ENCODE measurements at regions of chr9 and their contacts with region 1.

Region 1: GRCh38 chr9:8961186-8961851 is 1161.7 kb upstream of the DMAC1 start:
- DNase-seq: no peak
- ATAC-seq: no peak
- H3K4me3 ChIP-seq: no peak overlapping the region
- H3K4me3 Mint-ChIP-seq: no peak overlapping the region
- H3K27ac ChIP-seq: no peak overlapping the region
- H3K27ac Mint-ChIP-seq: no peak overlapping the region
- H3K4me1 ChIP-seq: no peaks in the 10 kb centered on the region
- H3K4me1 Mint-ChIP-seq: no peaks in the 10 kb centered on the region
- H3K27me3 ChIP-seq: no peaks in the 10 kb centered on the region
- H3K27me3 Mint-ChIP-seq: no peaks in the 10 kb centered on the region
- CTCF ChIP-seq: no peak

Region 2: GRCh38 chr9:8917956-8918739 is 43.2 kb before region 1 on chr9:
- CTCF ChIA-PET with region 1: no interaction called
- POLR2A ChIA-PET with region 1: no interaction called
- intact Hi-C with region 1: loop called in 1 of 2 experiments (anchors 10 kb)
- DNase-seq: no peak
- ATAC-seq: no peak
- H3K4me3 ChIP-seq: no peak overlapping the region
- H3K4me3 Mint-ChIP-seq: no peak overlapping the region
- H3K27ac ChIP-seq: no peak overlapping the region
- H3K27ac Mint-ChIP-seq: no peak overlapping the region
- H3K4me1 ChIP-seq: no peaks in the 10 kb centered on the region
- H3K4me1 Mint-ChIP-seq: no peaks in the 10 kb centered on the region
- H3K27me3 ChIP-seq: no peaks in the 10 kb centered on the region
- H3K27me3 Mint-ChIP-seq: no peaks in the 10 kb centered on the region
- CTCF ChIP-seq: no peak

Region 3: DNA sequence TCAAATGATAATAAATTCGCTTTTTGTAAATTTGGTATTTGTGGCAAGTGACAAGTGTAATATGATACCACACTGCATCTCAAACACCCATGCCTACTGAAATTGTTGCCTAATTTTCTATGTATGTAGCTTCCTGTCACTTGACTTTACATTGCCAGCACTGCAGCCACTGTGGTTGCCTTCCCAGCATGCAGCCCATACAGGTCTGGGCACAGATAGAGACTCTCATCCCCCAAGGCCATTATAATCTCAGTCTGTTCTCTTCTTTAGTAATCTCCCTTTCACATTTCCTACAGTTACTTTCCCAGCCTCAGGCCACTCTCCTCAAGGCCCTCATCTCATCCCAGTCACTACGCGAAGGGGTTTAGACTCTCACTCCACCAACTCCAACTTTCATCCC is 450.9 kb after region 1 on chr9:
- CTCF ChIA-PET with region 1: no interaction called
- POLR2A ChIA-PET with region 1: no interaction called
- intact Hi-C with region 1: no loop called
- DNase-seq: no peak
- ATAC-seq: no peak
- H3K4me3 ChIP-seq: no peak overlapping the region
- H3K4me3 Mint-ChIP-seq: no peak overlapping the region
- H3K27ac ChIP-seq: no peak overlapping the region
- H3K27ac Mint-ChIP-seq: no peak overlapping the region
- H3K4me1 ChIP-seq: no peaks in the 10 kb centered on the region
- H3K4me1 Mint-ChIP-seq: no peaks in the 10 kb centered on the region
- H3K27me3 ChIP-seq: no peaks in the 10 kb centered on the region
- H3K27me3 Mint-ChIP-seq: no peaks in the 10 kb centered on the region
- CTCF ChIP-seq: no peak

Measured in CD8-positive, alpha-beta T cell (primary cell).